HCT116 (cell line): ENCODE measurements at regions of chr12 and their contacts with region 1.

Region 1: DNA sequence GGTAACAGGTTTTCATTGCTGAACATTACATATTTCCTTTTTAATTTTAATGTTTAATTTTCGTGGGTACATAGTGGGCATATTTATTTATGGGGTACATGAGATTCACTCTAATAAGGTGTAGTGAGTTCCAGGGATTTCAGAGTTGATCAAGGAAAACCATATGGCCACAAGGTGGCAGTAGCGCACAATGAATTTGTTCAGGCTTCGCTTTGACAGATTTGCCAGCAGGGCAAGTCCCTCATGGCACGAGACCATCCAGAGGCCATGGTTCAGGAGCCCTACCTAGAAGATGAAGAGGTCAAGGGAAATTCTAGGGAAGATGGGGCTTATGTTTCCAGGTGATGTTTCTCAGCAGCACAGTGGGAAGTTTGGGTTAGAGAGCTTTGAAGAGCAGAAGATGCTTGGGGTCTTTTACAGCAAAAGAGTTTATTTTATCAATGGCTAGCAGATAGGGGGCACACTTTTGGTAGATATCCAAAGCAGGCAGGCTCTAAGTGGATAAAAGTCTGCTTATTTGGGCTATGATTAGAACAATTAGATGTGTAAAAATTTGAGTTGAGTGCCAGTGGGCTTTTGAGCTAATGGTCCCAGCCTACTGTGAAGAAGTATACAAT is 1004.4 kb downstream of the AACS start:
- DNase-seq: peak; percentile 45
- ATAC-seq: peak; percentile 60
- H3K4me3 ChIP-seq: no peak overlapping the region
- H3K27ac ChIP-seq: no peak overlapping the region
- H3K4me1 ChIP-seq: no peaks in the 10 kb centered on the region
- H3K27me3 ChIP-seq: no peaks in the 10 kb centered on the region
- CTCF ChIP-seq: peak; percentile 35 to 68 (median 52); a peak in 5 of 6 replicates
- POLR2A ChIP-seq: no peak
- RAD21 ChIP-seq: peak; percentile 66

Region 2: GRCh38 chr12:125183187-125184067 is 886.2 kb before region 1 on chr12:
- CTCF ChIA-PET with region 1: no interaction called
- POLR2A ChIA-PET with region 1: no interaction called
- RAD21 ChIA-PET with region 1: no interaction called
- intact Hi-C with region 1: loop called (anchors 10 kb)
- DNase-seq: peak; percentile 45
- ATAC-seq: peak; percentile 72
- H3K4me3 ChIP-seq: peak overlapping the region in 1 of 2 experiments; percentile 24; a peak in 1 of 4 replicates
- H3K27ac ChIP-seq: no peak overlapping the region
- H3K4me1 ChIP-seq: peaks cover 0 to 16% of the 10 kb centered on the region in 2 experiments; a peak in 2 of 4 replicates
- H3K27me3 ChIP-seq: peaks cover 11% of the 10 kb centered on the region; the same call in 1 of the 2 replicates
- CTCF ChIP-seq: peak; percentile 91 to 99 (median 97)
- POLR2A ChIP-seq: no peak
- RAD21 ChIP-seq: peak; percentile 98

Region 3: GRCh38 chr12:125528281-125528680 is 541.4 kb before region 1 on chr12:
- CTCF ChIA-PET with region 1: no interaction called
- POLR2A ChIA-PET with region 1: no interaction called
- RAD21 ChIA-PET with region 1: no interaction called
- intact Hi-C with region 1: no loop called
- DNase-seq: no peak
- ATAC-seq: no peak
- H3K4me3 ChIP-seq: no peak overlapping the region
- H3K27ac ChIP-seq: no peak overlapping the region
- H3K4me1 ChIP-seq: no peaks in the 10 kb centered on the region
- H3K27me3 ChIP-seq: no peaks in the 10 kb centered on the region
- CTCF ChIP-seq: no peak
- POLR2A ChIP-seq: no peak
- RAD21 ChIP-seq: no peak

Region 4: DNA sequence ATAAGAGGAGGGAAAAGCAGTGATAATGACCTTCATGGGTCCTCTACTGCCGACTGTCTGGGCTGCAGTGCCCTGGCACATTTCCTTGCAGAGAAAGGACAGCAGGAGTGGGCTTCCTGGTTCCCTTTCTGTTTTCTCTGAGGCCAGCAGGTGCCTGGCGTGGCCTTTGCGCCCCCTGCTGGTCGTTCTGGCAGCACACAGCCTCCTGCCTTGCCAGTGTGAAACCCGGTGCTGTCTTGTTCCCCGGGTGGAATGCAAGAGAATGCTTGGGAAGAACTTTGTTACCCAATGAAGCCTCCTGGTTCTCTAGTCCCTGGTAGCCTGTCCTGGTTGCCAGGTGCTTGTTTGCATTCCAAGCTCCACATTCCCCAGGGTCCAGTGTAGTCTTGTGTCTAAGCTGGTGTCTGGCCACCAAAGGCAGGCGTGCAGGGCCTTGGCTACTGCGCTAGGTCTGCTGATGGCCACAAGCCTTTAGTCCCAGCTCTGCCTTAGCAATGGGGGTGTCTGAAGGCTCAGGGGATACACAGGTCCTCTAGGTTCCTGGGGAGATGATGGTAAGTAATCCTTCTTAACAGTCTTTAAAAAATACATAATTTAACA is 804.9 kb after region 1 on chr12:
- CTCF ChIA-PET with region 1: no interaction called
- POLR2A ChIA-PET with region 1: no interaction called
- RAD21 ChIA-PET with region 1: no interaction called
- intact Hi-C with region 1: loop called (anchors 1 kb)
- DNase-seq: peak; percentile 50
- ATAC-seq: peak; percentile 99
- H3K4me3 ChIP-seq: no peak overlapping the region
- H3K27ac ChIP-seq: no peak overlapping the region
- H3K4me1 ChIP-seq: no peaks in the 10 kb centered on the region
- H3K27me3 ChIP-seq: 0 out of 2 replicates have a peak, but pooled peaks cover under 1% of the 10 kb centered on the region
- CTCF ChIP-seq: peak; percentile 69 to 99 (median 93); a peak in 5 of 6 replicates
- POLR2A ChIP-seq: no peak
- RAD21 ChIP-seq: peak; percentile 86

Region 5: GRCh38 chr12:127101076-127101475 is 1031.4 kb after region 1 on chr12:
- CTCF ChIA-PET with region 1: no interaction called
- POLR2A ChIA-PET with region 1: no interaction called
- RAD21 ChIA-PET with region 1: no interaction called
- intact Hi-C with region 1: loop called (anchors 5 kb)
- DNase-seq: no peak
- ATAC-seq: no peak
- H3K4me3 ChIP-seq: no peak overlapping the region; a peak in 1 of 4 replicates
- H3K27ac ChIP-seq: no peak overlapping the region
- H3K4me1 ChIP-seq: peaks cover 3 to 5% of the 10 kb centered on the region in 2 experiments; a peak in 3 of 4 replicates
- H3K27me3 ChIP-seq: no peaks in the 10 kb centered on the region
- CTCF ChIP-seq: no peak
- POLR2A ChIP-seq: no peak
- RAD21 ChIP-seq: no peak

Region 6: GRCh38 chr12:127381048-127381668 is 1311.5 kb after region 1 on chr12:
- CTCF ChIA-PET with region 1: no interaction called
- POLR2A ChIA-PET with region 1: no interaction called
- RAD21 ChIA-PET with region 1: no interaction called
- intact Hi-C with region 1: loop called (anchors 2 kb)
- DNase-seq: peak; percentile 21
- ATAC-seq: peak; percentile 99
- H3K4me3 ChIP-seq: no peak overlapping the region
- H3K27ac ChIP-seq: no peak overlapping the region
- H3K4me1 ChIP-seq: no peaks in the 10 kb centered on the region
- H3K27me3 ChIP-seq: no peaks in the 10 kb centered on the region
- CTCF ChIP-seq: peak; percentile 74 to 93 (median 92)
- POLR2A ChIP-seq: no peak
- RAD21 ChIP-seq: peak; percentile 89